ENCODE measurements at regions of chr14 and their contacts with region 1.

Region 1: GRCh38 chr14:39469094-39469710 is 37.0 kb upstream of the FBXO33 start:
- DNase-seq: no peak
- ATAC-seq: peak; percentile 97
- H3K4me3 ChIP-seq: no peak overlapping the region
- H3K27ac ChIP-seq: no peak overlapping the region
- H3K4me1 ChIP-seq: no peaks in the 10 kb centered on the region
- H3K27me3 ChIP-seq: no peaks in the 10 kb centered on the region
- CTCF ChIP-seq: peak; percentile 76 to 90 (median 78)
- EP300 ChIP-seq: no peak
- POLR2A ChIP-seq: no peak
- RAD21 ChIP-seq: peak; percentile 95

Region 2: DNA sequence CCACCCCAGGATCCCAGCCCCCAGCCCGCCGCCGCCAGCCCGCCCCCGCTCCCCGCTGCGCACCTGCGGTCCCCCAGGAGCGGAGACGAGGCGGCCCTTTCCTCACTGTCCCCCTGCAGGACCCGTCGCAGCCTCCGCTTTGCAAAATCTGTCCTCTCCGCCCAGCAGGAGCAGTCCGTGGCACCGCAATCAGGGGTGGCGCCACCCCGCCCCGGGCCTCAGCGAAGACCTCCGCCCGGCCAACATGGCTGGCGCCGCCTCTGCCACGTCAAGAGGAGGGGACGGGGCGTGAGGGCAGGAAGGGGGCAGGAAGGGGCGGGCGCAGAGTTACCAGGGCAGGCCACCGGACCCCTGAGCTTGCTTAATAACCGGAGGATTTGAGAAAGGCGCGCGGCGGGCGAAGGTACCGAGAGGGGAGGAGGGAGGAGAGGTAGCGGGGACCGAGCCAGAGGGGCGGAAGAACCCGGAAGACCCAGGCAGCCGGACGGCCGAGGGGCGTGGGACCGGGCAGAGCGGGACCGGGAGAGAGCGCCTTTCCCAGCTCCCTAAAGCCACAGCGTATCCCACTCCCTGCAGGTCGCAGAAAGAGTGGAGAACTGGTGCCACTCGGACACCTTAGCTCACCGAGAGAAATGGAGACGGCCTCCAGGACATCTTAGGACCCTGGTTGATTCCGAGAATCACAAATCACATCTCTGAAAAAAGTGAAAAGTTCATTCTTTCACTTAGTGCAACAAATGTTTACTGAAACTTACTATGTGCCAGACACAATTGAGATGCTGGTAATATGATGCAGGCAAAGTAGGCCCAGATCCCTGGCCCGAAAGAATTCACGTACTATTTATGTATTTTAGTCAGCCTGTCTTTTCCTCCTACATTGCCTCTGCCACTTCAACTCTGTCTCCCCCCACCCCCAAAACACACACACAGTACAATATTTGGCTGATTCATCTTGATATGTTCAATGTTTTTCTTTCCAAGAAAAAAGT is 365.9 kb before region 1 on chr14 and contains the start of gene SEC23A:
- CTCF ChIA-PET with region 1: interaction called, 9 read pairs
- POLR2A ChIA-PET with region 1: no interaction called
- RAD21 ChIA-PET with region 1: interaction called, 8 read pairs
- SMC1A ChIA-PET with region 1: interaction called, 8 read pairs
- in situ Hi-C with region 1: no loop called
- intact Hi-C with region 1: loop called (anchors 2 kb)
- DNase-seq: no peak
- ATAC-seq: peak; percentile 97
- H3K4me3 ChIP-seq: peak within 1 kb of the TSS; percentile 84
- H3K27ac ChIP-seq: peak within 1 kb of the TSS; percentile 73
- H3K4me1 ChIP-seq: peaks cover 6% of the 10 kb centered on the region; the same call in 1 of the 2 replicates
- H3K27me3 ChIP-seq: no peaks in the 10 kb centered on the region
- CTCF ChIP-seq: no peak
- EP300 ChIP-seq: no peak
- POLR2A ChIP-seq: peak; percentile 98
- RAD21 ChIP-seq: no peak
- polyA plus RNA-seq, gene SEC23A: 13.6 to 15.2 TPM

Region 3: DNA sequence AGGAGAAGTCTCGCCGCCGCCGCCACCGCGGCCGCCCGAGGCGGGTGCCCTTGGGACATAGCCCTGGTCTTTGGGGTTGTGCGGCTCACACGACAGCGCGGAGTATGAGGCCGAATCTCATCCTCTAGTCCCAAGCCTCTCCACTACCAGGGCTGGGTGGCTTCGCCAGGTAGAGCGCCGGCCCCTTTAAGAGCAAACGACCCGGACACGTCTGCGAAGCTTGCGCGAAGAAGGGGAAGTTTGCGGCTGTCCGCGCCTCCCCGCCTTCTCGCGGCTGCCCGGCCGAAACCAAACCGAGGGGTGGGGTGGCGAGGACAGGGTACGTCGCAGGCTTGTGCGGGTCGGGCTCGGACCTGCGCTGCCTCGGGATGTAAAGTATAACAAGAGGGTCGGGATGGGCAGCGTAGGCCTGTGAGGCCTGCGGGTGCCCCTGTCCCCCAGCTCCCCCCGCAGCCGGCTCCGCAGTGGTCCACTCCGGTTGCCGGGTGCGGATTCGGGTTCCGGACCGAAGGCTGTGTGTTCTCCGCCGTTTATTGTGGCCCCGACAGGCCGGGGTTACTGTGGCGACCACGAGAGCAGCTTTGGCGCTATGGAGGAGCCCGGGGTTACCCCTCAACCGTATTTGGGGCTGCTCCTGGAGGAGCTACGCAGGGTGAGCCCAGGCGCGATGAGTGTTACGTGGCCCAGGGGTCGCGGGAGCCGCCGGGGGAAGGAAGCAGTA is 202.2 kb before region 1 on chr14:
- CTCF ChIA-PET with region 1: interaction called, 4 read pairs
- POLR2A ChIA-PET with region 1: no interaction called
- RAD21 ChIA-PET with region 1: interaction called, 8 read pairs
- SMC1A ChIA-PET with region 1: interaction called, 10 read pairs
- in situ Hi-C with region 1: no loop called
- intact Hi-C with region 1: no loop called
- DNase-seq: no peak
- ATAC-seq: peak; percentile 92
- H3K4me3 ChIP-seq: peak overlapping the region; percentile 92
- H3K27ac ChIP-seq: peak overlapping the region; percentile 93
- H3K4me1 ChIP-seq: peaks cover 9% of the 10 kb centered on the region
- H3K27me3 ChIP-seq: no peaks in the 10 kb centered on the region
- CTCF ChIP-seq: no peak
- EP300 ChIP-seq: peak in 1 of 2 experiments; percentile 29; a peak in 1 of 4 replicates
- POLR2A ChIP-seq: peak; percentile 82
- RAD21 ChIP-seq: no peak

Region 4: GRCh38 chr14:39376667-39377403 is 92.4 kb before region 1 on chr14:
- CTCF ChIA-PET with region 1: interaction called, 11 read pairs
- POLR2A ChIA-PET with region 1: no interaction called
- RAD21 ChIA-PET with region 1: interaction called, 3 read pairs
- SMC1A ChIA-PET with region 1: interaction called, 6 read pairs
- in situ Hi-C with region 1: no loop called
- intact Hi-C with region 1: no loop called
- DNase-seq: no peak
- ATAC-seq: no peak
- H3K4me3 ChIP-seq: no peak overlapping the region
- H3K27ac ChIP-seq: no peak overlapping the region
- H3K4me1 ChIP-seq: no peaks in the 10 kb centered on the region
- H3K27me3 ChIP-seq: no peaks in the 10 kb centered on the region
- CTCF ChIP-seq: no peak
- EP300 ChIP-seq: no peak
- POLR2A ChIP-seq: no peak
- RAD21 ChIP-seq: no peak

Region 5: DNA sequence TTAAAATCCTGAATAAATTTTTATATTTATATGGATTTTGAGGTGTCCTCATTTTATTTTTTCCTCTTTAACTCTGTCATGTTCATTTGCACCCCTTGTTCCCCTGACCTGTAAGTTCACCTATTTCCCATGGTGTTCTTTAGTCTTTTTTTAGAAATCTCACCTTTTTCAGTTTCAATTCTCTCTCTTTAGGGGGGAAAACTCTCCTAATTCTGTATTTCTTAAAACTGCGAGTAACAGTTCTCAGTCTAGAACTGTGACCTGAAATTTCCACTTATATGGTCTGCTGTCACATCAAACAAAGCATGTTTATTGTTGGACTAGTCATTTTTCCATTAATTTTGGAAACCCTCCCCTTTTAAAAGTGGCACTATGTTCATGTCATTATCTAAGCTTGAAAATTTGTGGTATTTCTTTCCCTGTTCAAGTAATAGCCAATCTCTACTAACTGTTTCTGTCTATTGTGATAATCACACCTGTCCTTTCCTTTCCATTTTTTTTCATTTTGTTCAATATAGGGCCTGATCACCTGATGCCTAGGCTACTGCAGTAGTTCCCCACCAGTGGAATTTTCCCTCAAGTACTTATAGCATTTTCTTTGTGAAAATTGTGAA is 23.0 kb before region 1 on chr14:
- CTCF ChIA-PET with region 1: interaction called, 68 read pairs
- POLR2A ChIA-PET with region 1: interaction called, 8 read pairs
- RAD21 ChIA-PET with region 1: interaction called, 40 read pairs
- SMC1A ChIA-PET with region 1: interaction called, 65 read pairs
- in situ Hi-C with region 1: no loop called
- intact Hi-C with region 1: no loop called
- DNase-seq: no peak
- ATAC-seq: peak; percentile 56
- H3K4me3 ChIP-seq: peak overlapping the region; percentile 41; the same call in 1 of the 2 replicates
- H3K27ac ChIP-seq: peak overlapping the region; percentile 79
- H3K4me1 ChIP-seq: peaks cover 48% of the 10 kb centered on the region
- H3K27me3 ChIP-seq: no peaks in the 10 kb centered on the region
- CTCF ChIP-seq: no peak
- EP300 ChIP-seq: peak in 1 of 2 experiments; percentile 45; a peak in 1 of 4 replicates
- POLR2A ChIP-seq: no peak
- RAD21 ChIP-seq: no peak

Region 6: DNA sequence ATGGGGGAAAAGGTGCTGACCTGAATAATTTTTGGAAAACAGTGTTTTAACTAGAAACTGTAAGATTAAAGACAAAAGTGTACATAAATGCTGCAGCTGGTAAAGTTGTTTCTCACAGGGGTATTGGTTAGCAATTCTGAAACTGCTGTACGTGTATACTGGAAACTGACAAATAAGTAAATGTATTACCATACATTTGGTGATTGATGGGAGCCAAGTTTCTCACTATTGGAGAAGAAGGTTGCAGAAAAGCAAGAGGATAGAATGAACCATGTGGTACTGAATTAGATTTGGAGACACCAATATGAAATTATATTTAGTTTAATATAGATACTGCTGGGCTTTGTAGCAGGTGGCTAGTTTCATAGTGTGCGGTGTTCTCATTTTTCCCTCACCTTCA is 17.4 kb before region 1 on chr14:
- CTCF ChIA-PET with region 1: interaction called, 68 read pairs
- POLR2A ChIA-PET with region 1: interaction called, 8 read pairs
- RAD21 ChIA-PET with region 1: interaction called, 40 read pairs
- SMC1A ChIA-PET with region 1: interaction called, 65 read pairs
- in situ Hi-C with region 1: no loop called
- intact Hi-C with region 1: no loop called
- DNase-seq: no peak
- ATAC-seq: peak; percentile 70
- H3K4me3 ChIP-seq: no peak overlapping the region
- H3K27ac ChIP-seq: peak overlapping the region; percentile 48; the same call in 1 of the 2 replicates
- H3K4me1 ChIP-seq: peaks cover 40% of the 10 kb centered on the region
- H3K27me3 ChIP-seq: no peaks in the 10 kb centered on the region
- CTCF ChIP-seq: no peak
- EP300 ChIP-seq: no peak
- POLR2A ChIP-seq: no peak
- RAD21 ChIP-seq: no peak

Region 7: GRCh38 chr14:39884117-39884516 is 414.9 kb after region 1 on chr14:
- CTCF ChIA-PET with region 1: no interaction called
- POLR2A ChIA-PET with region 1: no interaction called
- RAD21 ChIA-PET with region 1: no interaction called
- SMC1A ChIA-PET with region 1: no interaction called
- in situ Hi-C with region 1: no loop called
- intact Hi-C with region 1: no loop called
- DNase-seq: no peak
- ATAC-seq: no peak
- H3K4me3 ChIP-seq: no peak overlapping the region
- H3K27ac ChIP-seq: no peak overlapping the region
- H3K4me1 ChIP-seq: no peaks in the 10 kb centered on the region
- H3K27me3 ChIP-seq: no peaks in the 10 kb centered on the region
- CTCF ChIP-seq: no peak
- EP300 ChIP-seq: no peak
- POLR2A ChIP-seq: no peak
- RAD21 ChIP-seq: no peak

Measured in GM12878 (cell line).